Activated T-helper 1 cell treated with anti-CD3 and anti-CD28 coated beads, Interleukin-12 subunit alpha, Interleukin-12 subunit beta, Interleukin-2, Interleukin-4 antibody, amounts not matched to agents 30 ng/mL and 10 ng/mL and 1 ng/mL, durations not matched to agents 14 hours and 24 hours and 36 hours (primary cell): ENCODE measurements at regions of chr20 and their contacts with region 1.

Region 1: GRCh38 chr20:13784893-13785715 is at the starts of genes ESF1 and NDUFAF5:
- DNase-seq: peak; percentile 90
- H3K4me3 Mint-ChIP-seq: peak within 1 kb of the TSS; percentile 99
- H3K27ac Mint-ChIP-seq: peak within 1 kb of the TSS; percentile 97
- H3K4me1 Mint-ChIP-seq: peaks cover 50% of the 10 kb centered on the region
- H3K27me3 Mint-ChIP-seq: no peaks in the 10 kb centered on the region
- total RNA-seq, gene ESF1: 30.3 and 32.1 TPM in 2 replicates
- total RNA-seq, gene NDUFAF5: 34.9 and 39.9 TPM in 2 replicates

Region 2: GRCh38 chr20:11890331-11891080 is 1894.6 kb before region 1 on chr20:
- intact Hi-C with region 1: loop called (anchors 2 kb)
- DNase-seq: peak; percentile 55
- H3K4me3 Mint-ChIP-seq: peak overlapping the region; percentile 82
- H3K27ac Mint-ChIP-seq: peak overlapping the region; percentile 1
- H3K4me1 Mint-ChIP-seq: peaks cover 25% of the 10 kb centered on the region
- H3K27me3 Mint-ChIP-seq: peaks cover 19% of the 10 kb centered on the region

Region 3: GRCh38 chr20:12925214-12925755 is 859.8 kb before region 1 on chr20:
- intact Hi-C with region 1: loop called (anchors 5 kb)
- DNase-seq: no peak
- H3K4me3 Mint-ChIP-seq: no peak overlapping the region
- H3K27ac Mint-ChIP-seq: no peak overlapping the region
- H3K4me1 Mint-ChIP-seq: peaks cover 6% of the 10 kb centered on the region
- H3K27me3 Mint-ChIP-seq: peaks cover 7% of the 10 kb centered on the region

Region 4: GRCh38 chr20:13638496-13639222 is 146.4 kb before region 1 on chr20 and contains the start of gene TASP1:
- intact Hi-C with region 1: loop called (anchors 1 kb)
- DNase-seq: peak; percentile 91
- H3K4me3 Mint-ChIP-seq: peak within 1 kb of the TSS; percentile 97
- H3K27ac Mint-ChIP-seq: peak within 1 kb of the TSS; percentile 71
- H3K4me1 Mint-ChIP-seq: peaks cover 30% of the 10 kb centered on the region
- H3K27me3 Mint-ChIP-seq: peaks cover 11% of the 10 kb centered on the region
- total RNA-seq, gene TASP1: 13.8 and 14.8 TPM in 2 replicates

Region 5: DNA sequence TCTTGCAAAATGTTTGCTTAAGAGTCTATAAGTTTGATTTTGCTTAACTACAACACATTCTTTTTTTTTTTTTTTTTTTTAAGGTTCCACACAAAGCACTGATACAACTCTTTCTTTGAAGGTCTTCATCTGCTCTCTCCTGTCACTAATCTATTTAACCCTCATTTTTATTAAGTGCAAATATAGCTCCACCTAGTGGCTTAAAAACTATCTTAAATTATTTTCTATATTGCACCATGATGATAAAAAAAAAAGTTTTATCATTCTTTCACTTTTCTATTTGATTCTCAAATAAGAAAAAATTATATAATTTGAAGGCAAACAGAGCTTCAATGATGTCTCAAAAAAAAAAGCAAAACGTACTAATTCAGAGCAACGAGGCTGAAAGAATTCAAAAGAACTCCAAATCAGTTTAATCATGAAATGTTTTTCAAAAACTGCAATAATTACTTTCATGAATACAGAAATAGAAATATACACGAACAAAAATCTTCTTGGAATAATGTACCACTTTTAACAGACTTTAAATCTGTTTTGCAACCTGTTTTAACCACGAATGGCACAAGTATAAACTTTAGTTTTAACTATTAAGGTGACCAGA is 13.2 kb before region 1 on chr20:
- intact Hi-C with region 1: loop called (anchors 2 kb)
- DNase-seq: no peak
- H3K4me3 Mint-ChIP-seq: no peak overlapping the region
- H3K27ac Mint-ChIP-seq: no peak overlapping the region
- H3K4me1 Mint-ChIP-seq: peaks cover 11% of the 10 kb centered on the region
- H3K27me3 Mint-ChIP-seq: no peaks in the 10 kb centered on the region

Region 6: GRCh38 chr20:13819885-13820645 is 35.0 kb after region 1 on chr20:
- intact Hi-C with region 1: loop called (anchors 1 kb)
- DNase-seq: no peak
- H3K4me3 Mint-ChIP-seq: no peak overlapping the region
- H3K27ac Mint-ChIP-seq: no peak overlapping the region
- H3K4me1 Mint-ChIP-seq: peaks cover 23% of the 10 kb centered on the region
- H3K27me3 Mint-ChIP-seq: no peaks in the 10 kb centered on the region

Region 7: DNA sequence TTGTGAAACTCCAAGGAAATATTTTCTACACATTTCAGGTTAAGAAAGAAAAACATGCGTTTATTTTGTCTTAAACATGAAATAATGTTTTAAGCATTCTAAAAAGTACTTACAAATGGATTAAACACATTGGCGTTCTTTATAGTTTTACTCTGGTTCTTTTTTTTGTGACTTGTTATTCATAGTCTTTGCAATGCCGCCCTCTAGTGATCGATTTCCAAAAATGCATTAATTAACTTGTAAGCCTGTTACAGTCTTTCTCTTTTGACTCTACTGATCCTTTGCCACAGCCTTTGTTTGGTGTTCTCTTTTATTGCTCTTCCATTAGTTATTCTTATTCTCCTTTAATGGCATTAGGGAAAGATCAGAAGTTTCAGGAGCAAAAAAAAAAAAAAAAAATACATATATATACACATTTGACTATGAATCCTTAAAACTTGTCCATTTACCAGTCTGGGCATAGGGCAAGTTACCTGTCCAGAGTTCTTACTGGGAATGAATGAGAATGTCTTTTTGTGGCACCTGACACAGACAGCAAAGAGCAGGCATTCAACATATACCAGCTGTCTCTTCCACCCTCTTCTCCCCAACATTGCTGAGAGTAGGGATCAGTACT is 270.1 kb after region 1 on chr20:
- intact Hi-C with region 1: loop called (anchors 1 kb)
- DNase-seq: no peak
- H3K4me3 Mint-ChIP-seq: no peak overlapping the region
- H3K27ac Mint-ChIP-seq: no peak overlapping the region
- H3K4me1 Mint-ChIP-seq: no peaks in the 10 kb centered on the region
- H3K27me3 Mint-ChIP-seq: no peaks in the 10 kb centered on the region